ENCODE measurements at regions of chr17 and their contacts with region 1.

Region 1: DNA sequence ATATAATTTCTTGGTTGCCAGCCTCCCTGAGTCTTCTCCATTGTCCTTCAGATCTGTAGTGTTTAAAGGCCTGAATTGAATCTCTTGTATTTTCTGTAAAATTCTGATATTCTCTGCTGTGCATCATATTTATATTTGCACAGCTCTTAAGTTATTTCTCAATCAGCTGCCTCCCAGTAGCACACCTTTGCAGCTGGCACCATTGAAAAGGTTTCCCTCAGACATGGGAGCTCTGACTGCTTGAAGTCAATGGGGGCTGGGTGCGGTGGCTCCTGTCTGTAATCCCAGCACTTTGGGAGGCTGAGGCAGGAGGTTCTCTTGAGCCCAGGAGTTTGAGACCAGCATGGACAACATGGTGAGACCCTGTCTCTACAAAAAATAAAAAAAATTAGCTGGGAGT is 40.4 kb downstream of the PITPNC1 start:
- DNase-seq: no peak
- ATAC-seq: no peak
- H3K4me3 Mint-ChIP-seq: no peak overlapping the region
- H3K27ac Mint-ChIP-seq: no peak overlapping the region
- H3K4me1 Mint-ChIP-seq: peaks cover 24% of the 10 kb centered on the region
- H3K27me3 Mint-ChIP-seq: no peaks in the 10 kb centered on the region
- CTCF ChIP-seq: no peak

Region 2: GRCh38 chr17:67293251-67294203 is 124.0 kb before region 1 on chr17:
- CTCF ChIA-PET with region 1: no interaction called
- POLR2A ChIA-PET with region 1: interaction called, 12 read pairs
- DNase-seq: peak; percentile 76
- ATAC-seq: peak; percentile 92
- H3K4me3 Mint-ChIP-seq: no peak overlapping the region
- H3K27ac Mint-ChIP-seq: no peak overlapping the region
- H3K4me1 Mint-ChIP-seq: peaks cover 13% of the 10 kb centered on the region
- H3K27me3 Mint-ChIP-seq: no peaks in the 10 kb centered on the region; the same call in 1 of the 2 replicates
- CTCF ChIP-seq: peak; percentile 60

Region 3: DNA sequence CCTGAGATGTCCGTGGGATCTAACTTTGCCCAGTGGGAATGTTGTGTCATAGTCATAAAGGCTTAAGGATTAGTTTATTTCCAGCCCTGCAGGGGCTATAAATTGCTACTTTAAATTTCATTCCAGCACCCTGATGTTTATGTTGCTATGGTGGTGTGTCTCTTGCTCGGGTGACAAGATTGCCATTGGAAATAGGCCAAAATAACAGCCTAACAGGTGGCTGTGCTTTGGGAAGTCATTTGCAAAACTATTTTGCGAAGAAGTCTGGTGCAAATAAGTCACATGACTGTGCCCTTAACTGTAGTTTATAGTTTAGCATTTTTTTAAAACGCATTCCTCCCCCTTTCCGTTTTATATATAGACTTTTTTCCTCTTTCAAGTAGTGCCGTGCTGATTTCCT is 17.3 kb before region 1 on chr17:
- CTCF ChIA-PET with region 1: no interaction called
- POLR2A ChIA-PET with region 1: no interaction called
- DNase-seq: no peak
- ATAC-seq: no peak
- H3K4me3 Mint-ChIP-seq: no peak overlapping the region
- H3K27ac Mint-ChIP-seq: no peak overlapping the region
- H3K4me1 Mint-ChIP-seq: peaks cover 41% of the 10 kb centered on the region
- H3K27me3 Mint-ChIP-seq: no peaks in the 10 kb centered on the region
- CTCF ChIP-seq: no peak

Measured in WTC11 (cell line).